ENCODE measurements at regions of chr9 and their contacts with region 1.

Region 1: DNA sequence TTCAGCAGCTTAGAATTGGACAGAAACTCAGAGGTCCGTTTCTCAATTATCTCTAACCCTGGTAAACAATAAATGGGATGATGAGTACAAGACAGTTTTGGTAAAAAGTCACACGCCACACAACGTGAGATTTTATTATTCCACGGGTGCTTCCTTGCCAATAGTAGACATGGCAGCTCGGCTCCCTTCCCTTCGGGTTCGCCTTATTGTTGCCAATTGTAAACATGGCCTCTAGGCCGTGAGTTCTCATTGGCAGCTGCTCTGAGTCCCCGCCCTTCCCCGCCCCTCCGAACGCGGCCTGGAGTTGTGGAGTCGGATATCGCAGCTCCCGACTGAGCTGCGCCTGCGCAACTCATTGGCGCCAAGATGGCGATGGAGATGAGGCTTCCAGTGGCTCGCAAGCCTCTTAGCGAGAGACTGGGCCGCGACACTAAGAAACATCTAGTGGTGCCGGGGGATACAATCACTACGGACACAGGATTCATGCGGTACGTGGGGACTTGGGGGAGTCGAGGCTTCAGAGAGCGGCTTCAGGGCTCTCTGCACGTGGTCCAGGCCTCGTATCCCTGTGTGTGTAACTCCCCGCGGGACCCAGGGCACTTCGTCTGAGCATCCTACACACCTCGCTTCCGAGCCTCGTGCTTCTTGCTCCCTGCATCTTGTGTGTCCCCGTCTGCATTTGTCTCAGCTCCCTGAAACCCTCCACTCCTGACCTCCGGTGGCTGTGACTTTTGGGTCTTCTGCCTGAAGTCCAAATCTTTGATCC is at the start of gene EXOSC2:
- DNase-seq: peak; percentile 99
- H3K4me3 Mint-ChIP-seq: peak within 1 kb of the TSS; percentile 90
- H3K27ac Mint-ChIP-seq: peak within 1 kb of the TSS; percentile 86
- H3K4me1 Mint-ChIP-seq: peaks cover 47% of the 10 kb centered on the region
- H3K27me3 Mint-ChIP-seq: no peaks in the 10 kb centered on the region
- total RNA-seq, gene EXOSC2: 77.3 to 80.5 TPM

Region 2: GRCh38 chr9:130610862-130611707 is 82.5 kb before region 1 on chr9:
- CTCF ChIA-PET with region 1: no interaction called
- POLR2A ChIA-PET with region 1: no interaction called
- intact Hi-C with region 1: no loop called
- DNase-seq: no peak
- H3K4me3 Mint-ChIP-seq: no peak overlapping the region
- H3K27ac Mint-ChIP-seq: no peak overlapping the region
- H3K4me1 Mint-ChIP-seq: no peaks in the 10 kb centered on the region
- H3K27me3 Mint-ChIP-seq: no peaks in the 10 kb centered on the region

Region 3: DNA sequence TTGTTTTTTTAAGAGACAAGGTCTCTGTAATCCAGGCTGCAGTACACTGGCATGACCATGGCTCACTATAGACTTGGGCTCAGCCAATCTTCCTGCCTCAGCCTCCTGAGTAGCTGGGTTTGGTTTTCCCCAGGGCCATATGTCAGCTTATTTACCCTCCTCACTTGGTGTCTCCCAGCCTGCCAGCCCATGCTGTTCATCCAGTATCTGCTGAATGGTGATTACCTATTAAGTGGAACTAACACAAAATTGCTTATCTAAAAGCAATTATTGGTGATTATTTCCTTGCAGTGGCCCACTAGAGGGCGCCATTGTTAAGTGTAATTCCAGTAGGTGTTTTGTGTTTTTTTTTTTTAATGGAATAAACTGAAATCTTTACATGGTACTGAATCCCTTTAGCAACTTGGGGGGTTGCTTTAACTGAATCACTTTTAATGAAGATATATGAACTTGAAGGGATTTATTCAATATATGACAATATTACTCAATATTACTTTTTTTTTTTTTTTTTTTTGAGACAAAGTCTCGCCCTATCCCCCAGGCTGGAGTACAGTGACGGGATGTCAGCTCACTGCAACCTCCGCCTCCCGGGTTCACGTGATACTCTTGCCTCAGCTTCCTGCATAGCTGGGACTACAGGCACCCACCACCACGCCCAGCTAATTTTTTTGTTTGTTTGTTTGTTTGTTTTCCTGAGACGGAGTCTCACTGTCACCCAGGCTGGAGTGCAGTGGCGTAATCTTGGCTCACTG is 13.8 kb after region 1 on chr9:
- CTCF ChIA-PET with region 1: interaction called, 29 read pairs
- POLR2A ChIA-PET with region 1: interaction called, 9 read pairs
- intact Hi-C with region 1: loop called (anchors 1 kb)
- DNase-seq: peak; percentile 69
- H3K4me3 Mint-ChIP-seq: no peak overlapping the region
- H3K27ac Mint-ChIP-seq: no peak overlapping the region
- H3K4me1 Mint-ChIP-seq: peaks cover 6% of the 10 kb centered on the region
- H3K27me3 Mint-ChIP-seq: no peaks in the 10 kb centered on the region

Region 4: GRCh38 chr9:130765137-130766020 is 71.8 kb after region 1 on chr9:
- CTCF ChIA-PET with region 1: no interaction called
- POLR2A ChIA-PET with region 1: no interaction called
- intact Hi-C with region 1: loop called (anchors 2 kb)
- DNase-seq: peak; percentile 58
- H3K4me3 Mint-ChIP-seq: no peak overlapping the region
- H3K27ac Mint-ChIP-seq: no peak overlapping the region
- H3K4me1 Mint-ChIP-seq: peaks cover 36% of the 10 kb centered on the region
- H3K27me3 Mint-ChIP-seq: no peaks in the 10 kb centered on the region

Measured in activated CD4-positive, alpha-beta memory T cell treated with anti-CD3 and anti-CD28 coated beads for 36 hours (primary cell).